ENCODE measurements at regions of chr12 and their contacts with region 1.

Region 1: GRCh38 chr12:124466216-124467128 is 100.9 kb downstream of the NCOR2 start:
- DNase-seq: peak; percentile 90
- ATAC-seq: peak; percentile 96
- H3K4me3 ChIP-seq: peak overlapping the region; percentile 5 to 61 (median 45)
- H3K4me3 Mint-ChIP-seq: peak overlapping the region; percentile 80
- H3K27ac ChIP-seq: peak overlapping the region; percentile 68 to 78
- H3K27ac Mint-ChIP-seq: peak overlapping the region; percentile 83
- H3K4me1 ChIP-seq: peaks cover 17 to 22% of the 10 kb centered on the region in 2 donors
- H3K4me1 Mint-ChIP-seq: peaks cover 48% of the 10 kb centered on the region
- H3K27me3 ChIP-seq: no peaks in the 10 kb centered on the region
- H3K27me3 Mint-ChIP-seq: no peaks in the 10 kb centered on the region
- CTCF ChIP-seq: peak; percentile 70

Region 2: DNA sequence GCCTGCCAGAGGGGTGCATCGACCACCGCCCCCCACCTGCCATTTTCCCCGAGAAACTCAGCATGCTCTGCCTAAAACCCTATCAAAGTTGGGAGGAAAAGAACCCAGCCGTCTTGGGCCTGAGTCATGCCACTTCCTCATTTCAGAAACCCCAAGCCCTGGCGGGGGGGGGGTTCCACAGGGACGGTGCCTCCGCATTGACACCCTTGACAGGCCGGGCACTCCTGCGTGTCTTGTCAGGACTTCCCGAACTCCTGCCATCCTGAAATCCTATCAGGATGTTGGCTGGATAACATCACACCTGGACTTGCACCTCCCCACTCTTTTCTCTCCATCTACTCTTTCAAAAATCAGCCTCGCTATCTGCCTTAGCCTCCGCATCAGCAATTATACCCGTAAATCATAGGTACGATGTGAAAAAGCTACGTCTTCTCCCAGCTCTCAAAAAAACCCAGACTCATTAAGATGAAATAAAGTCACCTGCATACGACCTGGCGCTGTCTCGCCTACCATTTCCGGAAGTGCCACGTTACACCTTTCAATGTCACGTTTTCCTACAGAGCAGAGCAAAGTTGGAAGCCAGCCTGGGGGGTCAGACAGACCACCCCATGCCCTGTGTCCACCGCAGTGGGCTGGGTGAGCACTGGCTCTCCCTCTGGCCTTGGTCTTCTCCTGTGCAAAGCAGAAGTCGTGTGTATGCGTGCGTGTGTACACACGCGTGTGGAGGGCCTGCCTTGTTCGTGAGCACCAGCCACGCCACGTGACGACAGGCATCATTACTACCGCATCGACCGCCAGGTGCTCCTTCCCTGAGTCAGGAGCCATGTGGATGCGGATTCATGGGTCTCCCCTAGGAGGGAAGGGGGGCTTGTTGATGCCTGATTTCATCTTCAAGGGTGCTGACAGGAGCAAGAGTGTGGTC is 74.9 kb before region 1 on chr12:
- CTCF ChIA-PET with region 1: interaction called, 7 read pairs
- POLR2A ChIA-PET with region 1: interaction called, 4 read pairs
- intact Hi-C with region 1: loop called (anchors 2 kb)
- DNase-seq: peak; percentile 88
- ATAC-seq: peak; percentile 74
- H3K4me3 ChIP-seq: peak overlapping the region; percentile 26 to 63 (median 31)
- H3K4me3 Mint-ChIP-seq: peak overlapping the region; percentile 94
- H3K27ac ChIP-seq: peak overlapping the region; percentile 63 to 86
- H3K27ac Mint-ChIP-seq: peak overlapping the region; percentile 74
- H3K4me1 ChIP-seq: peaks cover 39 to 49% of the 10 kb centered on the region in 2 donors
- H3K4me1 Mint-ChIP-seq: peaks cover 39% of the 10 kb centered on the region
- H3K27me3 ChIP-seq: no peaks in the 10 kb centered on the region
- H3K27me3 Mint-ChIP-seq: no peaks in the 10 kb centered on the region
- CTCF ChIP-seq: no peak

Region 3: DNA sequence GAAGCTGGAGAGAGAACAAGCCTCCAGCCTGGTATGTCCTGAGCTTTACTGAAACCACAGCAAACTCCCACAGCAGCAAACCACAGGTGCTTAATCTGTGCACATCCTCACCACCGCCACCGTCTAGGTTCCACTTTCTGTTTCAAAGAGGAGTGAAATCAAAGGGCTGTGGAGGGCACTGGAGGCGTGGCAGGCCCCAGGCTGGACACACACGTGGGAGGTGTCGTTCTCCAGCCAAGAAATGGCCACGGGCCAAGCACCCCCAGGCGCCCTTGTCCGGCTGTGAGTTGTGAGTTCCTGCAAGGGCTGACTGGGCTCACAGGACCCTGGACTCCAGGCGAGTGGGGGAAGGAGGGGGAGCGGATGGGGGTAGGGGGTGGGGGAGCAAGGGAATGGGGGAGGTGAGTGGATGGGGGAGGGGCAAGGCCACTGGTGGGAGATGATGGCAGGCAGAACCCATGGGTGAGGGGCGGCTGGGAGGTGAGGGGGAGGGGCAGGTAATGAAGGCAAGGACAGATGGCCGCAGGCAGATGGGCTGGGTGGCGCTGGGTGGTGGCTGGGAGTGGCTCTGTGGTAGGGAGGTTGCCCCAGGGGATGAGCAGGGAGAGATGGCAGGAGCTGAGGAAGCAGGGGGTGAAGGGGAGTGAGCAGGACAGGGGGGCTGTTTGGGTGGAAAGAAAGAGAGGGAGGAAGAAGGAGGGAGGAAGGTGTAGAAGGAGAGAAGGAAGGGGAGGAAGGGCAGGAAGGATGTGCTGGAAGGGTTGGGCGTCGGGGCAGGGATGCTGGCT is 14.2 kb after region 1 on chr12:
- CTCF ChIA-PET with region 1: interaction called, 3 read pairs
- POLR2A ChIA-PET with region 1: interaction called, 14 read pairs
- intact Hi-C with region 1: loop called (anchors 1 kb)
- DNase-seq: peak; percentile 50
- ATAC-seq: peak; percentile 32
- H3K4me3 ChIP-seq: no peak overlapping the region
- H3K4me3 Mint-ChIP-seq: peak overlapping the region; percentile 52
- H3K27ac ChIP-seq: peak overlapping the region in 1 of 2 donors; percentile 5
- H3K27ac Mint-ChIP-seq: peak overlapping the region; percentile 15
- H3K4me1 ChIP-seq: peaks cover 33 to 63% of the 10 kb centered on the region in 2 donors
- H3K4me1 Mint-ChIP-seq: peaks cover 65% of the 10 kb centered on the region
- H3K27me3 ChIP-seq: no peaks in the 10 kb centered on the region
- H3K27me3 Mint-ChIP-seq: no peaks in the 10 kb centered on the region
- CTCF ChIP-seq: no peak

Region 4: GRCh38 chr12:124493809-124494750 is 27.6 kb after region 1 on chr12:
- CTCF ChIA-PET with region 1: interaction called, 7 read pairs
- POLR2A ChIA-PET with region 1: no interaction called
- intact Hi-C with region 1: loop called (anchors 1 kb)
- DNase-seq: peak; percentile 75
- ATAC-seq: peak; percentile 89
- H3K4me3 ChIP-seq: peak overlapping the region in 1 of 5 experiments; percentile 7
- H3K4me3 Mint-ChIP-seq: peak overlapping the region; percentile 83
- H3K27ac ChIP-seq: peak overlapping the region; percentile 32 to 75
- H3K27ac Mint-ChIP-seq: peak overlapping the region; percentile 86
- H3K4me1 ChIP-seq: peaks cover 33 to 69% of the 10 kb centered on the region in 2 donors
- H3K4me1 Mint-ChIP-seq: peaks cover 68% of the 10 kb centered on the region
- H3K27me3 ChIP-seq: no peaks in the 10 kb centered on the region
- H3K27me3 Mint-ChIP-seq: no peaks in the 10 kb centered on the region
- CTCF ChIP-seq: no peak